ENCODE measurements at regions of chr1 and their contacts with region 1.

Region 1: DNA sequence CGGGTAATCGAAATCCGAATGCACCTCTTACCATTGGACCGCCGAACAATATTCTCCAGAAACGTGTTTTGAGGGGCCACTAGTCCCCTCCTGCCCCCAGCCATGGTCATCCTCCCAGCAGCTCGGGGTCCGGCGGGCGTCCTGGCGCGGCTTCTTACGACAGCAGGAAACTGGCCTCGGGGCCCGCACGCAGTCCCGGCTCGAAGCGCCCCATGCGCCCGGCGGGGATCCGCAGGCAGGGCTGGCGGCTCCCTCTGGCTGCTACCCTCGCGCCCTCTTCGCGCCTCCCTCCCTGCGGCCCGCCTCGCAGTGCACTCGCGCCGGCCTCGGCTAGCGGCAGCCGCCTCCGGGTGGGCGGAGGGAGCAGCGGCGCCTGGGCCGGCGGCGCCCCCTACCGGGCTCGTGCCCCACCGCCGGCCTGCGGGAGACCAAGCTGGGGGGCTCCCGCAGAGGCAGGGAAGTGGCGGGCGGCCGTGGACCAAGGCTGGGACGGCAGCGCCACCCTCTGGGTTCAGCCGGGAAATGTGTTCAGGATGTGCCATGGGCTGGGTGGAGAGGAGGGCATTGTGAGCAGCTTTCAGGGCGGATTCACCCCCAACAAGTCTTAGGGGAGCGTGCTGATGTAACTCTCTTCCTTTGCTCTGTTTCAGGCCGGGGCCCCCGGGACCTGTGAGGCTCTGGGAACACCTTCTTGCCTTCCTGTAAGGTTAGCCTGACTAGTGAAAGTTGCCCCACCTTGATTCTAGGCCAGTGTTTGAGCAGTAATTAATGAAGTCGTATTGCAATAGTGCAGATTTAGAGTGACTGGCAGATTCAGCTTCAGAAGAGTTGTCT is at the start of gene KCNH1:
- DNase-seq: peak; percentile 62
- ATAC-seq: peak; percentile 99
- H3K4me3 ChIP-seq: peak within 1 kb of the TSS in 1 of 3 experiments; percentile 61; a peak in 2 of 6 replicates
- H3K27ac ChIP-seq: no peak within 1 kb of the TSS
- H3K4me1 ChIP-seq: peaks cover 12% of the 10 kb centered on the region; the same call in 1 of the 2 replicates
- H3K27me3 ChIP-seq: peaks cover 5 to 17% of the 10 kb centered on the region in 2 experiments; a peak in 4 of 5 replicates
- CTCF ChIP-seq: peak; percentile 93
- EP300 ChIP-seq: no peak
- POLR2A ChIP-seq: no peak
- RAD21 ChIP-seq: peak; percentile 99
- total RNA-seq, gene KCNH1: not detected in 2 replicates

Region 2: GRCh38 chr1:210400043-210400840 is 733.8 kb before region 1 on chr1:
- CTCF ChIA-PET with region 1: no interaction called
- POLR2A ChIA-PET with region 1: no interaction called
- in situ Hi-C with region 1: loop called (anchors 10 kb)
- intact Hi-C with region 1: no loop called
- DNase-seq: peak; percentile 65
- ATAC-seq: peak; percentile 99
- H3K4me3 ChIP-seq: no peak overlapping the region
- H3K27ac ChIP-seq: no peak overlapping the region
- H3K4me1 ChIP-seq: peaks cover 7% of the 10 kb centered on the region
- H3K27me3 ChIP-seq: no peaks in the 10 kb centered on the region
- CTCF ChIP-seq: peak; percentile 91
- EP300 ChIP-seq: no peak
- POLR2A ChIP-seq: no peak
- RAD21 ChIP-seq: peak; percentile 90

Region 3: DNA sequence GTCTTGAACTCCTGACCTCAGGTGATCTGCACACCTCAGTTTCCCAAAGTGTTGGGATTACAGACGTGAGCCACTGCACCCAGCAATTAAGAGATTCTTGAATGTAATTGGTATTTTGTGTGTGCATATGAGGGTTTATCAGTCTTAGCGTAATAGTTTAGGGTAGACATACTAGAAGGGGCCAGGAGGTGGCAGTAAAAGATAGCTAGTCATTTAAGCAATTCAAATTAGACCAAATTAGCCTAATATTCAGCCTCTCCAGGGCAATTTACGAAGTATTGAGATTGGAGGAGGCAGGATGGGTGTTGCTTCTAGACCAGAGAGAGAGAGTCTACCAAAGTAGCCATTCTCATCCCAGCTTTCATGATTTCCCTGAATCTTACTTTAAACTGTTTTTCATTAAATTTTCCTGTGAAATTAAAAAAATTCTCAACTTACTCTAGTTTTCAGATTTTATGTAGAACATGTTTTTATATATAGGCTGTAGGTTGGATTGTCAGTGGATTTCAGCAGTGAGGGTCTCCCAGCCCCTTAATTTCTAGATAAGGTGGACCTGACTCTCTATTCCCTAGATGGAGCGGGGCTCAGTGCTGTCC is 685.7 kb before region 1 on chr1:
- CTCF ChIA-PET with region 1: interaction called, 22 read pairs
- POLR2A ChIA-PET with region 1: no interaction called
- in situ Hi-C with region 1: no loop called
- intact Hi-C with region 1: loop called (anchors 1 kb)
- DNase-seq: peak; percentile 14
- ATAC-seq: peak; percentile 70
- H3K4me3 ChIP-seq: no peak overlapping the region
- H3K27ac ChIP-seq: no peak overlapping the region
- H3K4me1 ChIP-seq: no peaks in the 10 kb centered on the region
- H3K27me3 ChIP-seq: no peaks in the 10 kb centered on the region
- CTCF ChIP-seq: peak; percentile 52
- EP300 ChIP-seq: no peak
- POLR2A ChIP-seq: no peak
- RAD21 ChIP-seq: no peak

Region 4: DNA sequence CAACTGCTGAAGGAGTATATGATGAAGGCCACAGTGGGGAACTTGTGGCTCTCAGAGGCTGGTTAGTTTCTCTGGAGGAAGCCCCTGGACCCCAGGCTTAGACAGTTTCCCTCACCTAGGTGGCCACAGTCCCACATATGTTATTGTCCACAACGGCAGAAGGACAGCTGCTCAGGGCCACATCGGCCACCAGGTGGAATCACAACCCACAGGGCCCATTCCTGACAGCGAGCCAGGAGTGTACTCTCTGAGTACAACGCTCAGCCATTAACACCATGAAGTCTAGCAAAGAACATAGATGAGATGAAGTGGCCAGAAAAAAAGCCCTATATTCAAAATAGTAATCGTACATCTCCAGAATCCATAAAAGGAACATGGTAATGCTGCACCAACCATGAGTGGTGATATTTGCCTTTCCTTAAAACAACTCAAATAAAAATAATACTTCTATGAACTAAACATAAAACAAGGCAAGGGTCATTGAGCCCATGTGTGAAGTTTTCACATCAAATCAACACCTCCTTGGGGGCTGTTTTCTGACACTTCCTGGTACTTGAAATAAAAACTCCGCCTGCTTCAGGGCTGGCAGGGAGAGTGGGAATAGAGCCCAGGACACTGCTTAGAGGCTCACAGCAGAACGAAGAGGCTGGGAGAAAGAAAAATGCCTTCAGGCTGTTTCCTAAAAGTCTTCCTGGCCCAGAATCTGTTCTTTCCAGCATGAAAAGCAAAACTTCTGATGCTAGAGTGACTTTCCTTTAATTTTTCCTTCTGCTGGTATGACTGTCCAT is 422.0 kb before region 1 on chr1:
- CTCF ChIA-PET with region 1: no interaction called
- POLR2A ChIA-PET with region 1: no interaction called
- in situ Hi-C with region 1: loop called (anchors 10 kb)
- intact Hi-C with region 1: loop called (anchors 2 kb)
- DNase-seq: no peak
- ATAC-seq: peak; percentile 95
- H3K4me3 ChIP-seq: no peak overlapping the region
- H3K27ac ChIP-seq: no peak overlapping the region
- H3K4me1 ChIP-seq: no peaks in the 10 kb centered on the region
- H3K27me3 ChIP-seq: no peaks in the 10 kb centered on the region
- CTCF ChIP-seq: peak; percentile 55
- EP300 ChIP-seq: no peak
- POLR2A ChIP-seq: no peak
- RAD21 ChIP-seq: no peak

Region 5: DNA sequence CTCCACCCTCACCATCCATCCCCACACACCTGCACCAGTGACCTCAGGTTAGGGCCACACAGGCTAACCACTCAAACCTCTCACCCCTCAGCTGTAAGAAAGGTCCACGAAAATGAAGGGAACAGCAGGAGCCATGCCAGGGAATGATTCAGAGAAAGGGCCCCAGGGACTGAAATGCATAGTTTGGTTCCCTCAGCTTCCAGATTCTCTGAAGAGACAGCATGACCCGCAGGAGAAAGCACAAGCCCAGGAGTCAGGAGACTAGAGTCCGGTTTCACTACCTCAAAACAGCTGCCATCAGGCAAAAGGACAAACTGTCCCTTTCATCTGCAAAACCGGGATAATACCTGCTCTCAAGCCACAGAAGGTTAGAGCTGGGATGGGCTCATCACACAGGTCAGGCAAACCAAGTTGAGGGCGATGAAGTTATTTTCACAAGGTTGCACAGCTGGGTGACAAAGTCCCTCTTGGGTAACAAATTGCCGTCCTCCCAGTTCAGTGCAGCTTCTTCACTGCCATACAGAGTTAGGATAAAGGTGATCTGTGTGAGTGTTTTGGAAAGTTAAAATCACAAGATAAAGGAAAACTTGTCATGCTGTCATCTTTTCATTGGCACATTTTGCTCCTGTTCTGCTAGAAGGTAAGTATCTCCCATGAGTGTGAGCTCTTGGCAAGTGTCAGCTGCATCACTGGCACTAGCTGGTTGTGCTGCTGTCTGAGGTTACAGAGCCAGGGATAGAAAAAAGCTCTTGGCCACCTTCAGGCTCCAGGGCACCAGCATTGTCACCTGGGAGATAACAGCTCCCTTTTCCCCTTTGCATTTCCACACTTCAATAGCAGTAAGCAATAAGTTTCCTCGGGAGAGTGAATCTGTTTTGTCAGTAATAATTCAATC is 120.5 kb before region 1 on chr1:
- CTCF ChIA-PET with region 1: no interaction called
- POLR2A ChIA-PET with region 1: no interaction called
- in situ Hi-C with region 1: no loop called
- intact Hi-C with region 1: no loop called
- DNase-seq: no peak
- ATAC-seq: peak; percentile 55
- H3K4me3 ChIP-seq: no peak overlapping the region
- H3K27ac ChIP-seq: no peak overlapping the region
- H3K4me1 ChIP-seq: no peaks in the 10 kb centered on the region
- H3K27me3 ChIP-seq: no peaks in the 10 kb centered on the region
- CTCF ChIP-seq: no peak
- EP300 ChIP-seq: no peak
- POLR2A ChIP-seq: no peak
- RAD21 ChIP-seq: no peak

Region 6: DNA sequence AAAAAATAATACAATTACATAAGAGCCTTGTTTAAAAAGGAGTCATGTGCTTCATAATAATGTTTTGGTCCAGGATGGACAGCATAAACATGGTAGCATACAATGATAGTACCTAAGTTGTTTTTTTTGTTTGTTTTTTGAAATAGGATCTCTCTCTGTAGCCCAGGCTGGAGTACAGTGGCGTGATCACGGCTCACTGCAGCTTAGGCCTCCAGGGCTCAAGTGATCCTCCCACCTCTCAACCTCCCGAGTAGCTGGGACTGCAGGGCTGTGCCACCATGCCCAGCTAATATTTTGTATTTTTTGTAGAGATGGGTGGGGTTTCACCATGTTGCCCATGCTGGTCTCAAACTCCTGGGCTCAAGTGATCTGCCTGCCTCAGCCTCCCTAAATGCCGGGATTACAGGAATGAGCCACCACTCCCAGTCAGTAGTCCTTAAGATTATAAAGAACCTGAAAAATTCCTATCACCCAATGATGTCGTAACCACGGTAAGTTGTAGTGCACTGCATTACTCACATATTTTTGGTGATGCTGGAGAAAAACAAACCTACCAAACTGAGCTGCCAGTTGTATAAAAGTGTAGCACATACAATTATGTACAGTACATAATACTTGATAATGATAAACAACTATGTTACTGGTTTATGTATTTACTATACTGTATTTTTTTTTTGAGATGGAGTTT is 102.7 kb after region 1 on chr1:
- CTCF ChIA-PET with region 1: no interaction called
- POLR2A ChIA-PET with region 1: no interaction called
- in situ Hi-C with region 1: no loop called
- intact Hi-C with region 1: no loop called
- DNase-seq: no peak
- ATAC-seq: no peak
- H3K4me3 ChIP-seq: no peak overlapping the region
- H3K27ac ChIP-seq: no peak overlapping the region
- H3K4me1 ChIP-seq: no peaks in the 10 kb centered on the region
- H3K27me3 ChIP-seq: no peaks in the 10 kb centered on the region
- CTCF ChIP-seq: no peak
- EP300 ChIP-seq: no peak
- POLR2A ChIP-seq: no peak
- RAD21 ChIP-seq: no peak

Region 7: GRCh38 chr1:211258756-211259637 is 124.9 kb after region 1 on chr1 and contains the start of gene RCOR3:
- CTCF ChIA-PET with region 1: no interaction called
- POLR2A ChIA-PET with region 1: no interaction called
- in situ Hi-C with region 1: no loop called
- intact Hi-C with region 1: loop called (anchors 10 kb)
- DNase-seq: peak; percentile 82
- ATAC-seq: peak; percentile 79
- H3K4me3 ChIP-seq: peak within 1 kb of the TSS; percentile 93 to 97 (median 94)
- H3K27ac ChIP-seq: peak within 1 kb of the TSS; percentile 98
- H3K4me1 ChIP-seq: peaks cover 26% of the 10 kb centered on the region; the same call in 1 of the 2 replicates
- H3K27me3 ChIP-seq: no peaks in the 10 kb centered on the region; a peak in 1 of 5 replicates
- CTCF ChIP-seq: peak; percentile 85
- EP300 ChIP-seq: peak in 1 of 2 experiments; percentile 57; a peak in 1 of 4 replicates
- POLR2A ChIP-seq: peak; percentile 67 to 71; a peak in 3 of 4 replicates
- RAD21 ChIP-seq: 0 out of 2 replicates have a peak, but pooled peaks have one; percentile 24
- total RNA-seq, gene RCOR3: 9.6 and 16.8 TPM in 2 replicates

Measured in HepG2 (cell line).